GM12878 (cell line): ENCODE measurements at regions of chr19 and their contacts with region 1.

Region 1: GRCh38 chr19:48255376-48256303 is at the start of gene CARD8:
- DNase-seq: peak; percentile 88
- ATAC-seq: peak; percentile 82
- H3K4me3 ChIP-seq: peak within 1 kb of the TSS; percentile 82
- H3K27ac ChIP-seq: peak within 1 kb of the TSS; percentile 96
- H3K4me1 ChIP-seq: peaks cover 13% of the 10 kb centered on the region
- H3K27me3 ChIP-seq: no peaks in the 10 kb centered on the region
- CTCF ChIP-seq: no peak; a peak in 1 of 6 replicates
- EP300 ChIP-seq: 0 out of 4 replicates have a peak, but pooled peaks of 1 of the 2 experiments have one; percentile 14
- POLR2A ChIP-seq: peak; percentile 81
- RAD21 ChIP-seq: no peak
- polyA plus RNA-seq, gene CARD8: 41.7 to 44.0 TPM

Region 2: GRCh38 chr19:47973529-47973928 is 282.1 kb before region 1 on chr19:
- CTCF ChIA-PET with region 1: no interaction called
- POLR2A ChIA-PET with region 1: no interaction called
- RAD21 ChIA-PET with region 1: no interaction called
- SMC1A ChIA-PET with region 1: no interaction called
- in situ Hi-C with region 1: loop called (anchors 10 kb)
- intact Hi-C with region 1: no loop called
- DNase-seq: no peak
- ATAC-seq: no peak
- H3K4me3 ChIP-seq: no peak overlapping the region
- H3K27ac ChIP-seq: no peak overlapping the region
- H3K4me1 ChIP-seq: no peaks in the 10 kb centered on the region
- H3K27me3 ChIP-seq: no peaks in the 10 kb centered on the region
- CTCF ChIP-seq: no peak
- EP300 ChIP-seq: no peak
- POLR2A ChIP-seq: no peak
- RAD21 ChIP-seq: no peak

Region 3: GRCh38 chr19:48110350-48110966 is 145.2 kb before region 1 on chr19 and contains the start of gene PLA2G4C:
- CTCF ChIA-PET with region 1: interaction called, 60 read pairs
- POLR2A ChIA-PET with region 1: interaction called, 5 read pairs
- RAD21 ChIA-PET with region 1: interaction called, 38 read pairs
- SMC1A ChIA-PET with region 1: interaction called, 44 read pairs
- in situ Hi-C with region 1: no loop called
- intact Hi-C with region 1: loop called (anchors 1 kb)
- DNase-seq: peak; percentile 48
- ATAC-seq: peak; percentile 86
- H3K4me3 ChIP-seq: peak within 1 kb of the TSS; percentile 83; the same call in 1 of the 2 replicates
- H3K27ac ChIP-seq: peak within 1 kb of the TSS; percentile 62
- H3K4me1 ChIP-seq: peaks cover 7% of the 10 kb centered on the region
- H3K27me3 ChIP-seq: no peaks in the 10 kb centered on the region
- CTCF ChIP-seq: no peak
- EP300 ChIP-seq: 0 out of 4 replicates have a peak, but pooled peaks of 1 of the 2 experiments have one; percentile 14
- POLR2A ChIP-seq: peak; percentile 86
- RAD21 ChIP-seq: no peak
- polyA plus RNA-seq, gene PLA2G4C: 0.53 to 0.64 TPM

Region 4: GRCh38 chr19:48170038-48170812 is 85.4 kb before region 1 on chr19 and contains the starts of genes LIG1 and ZSWIM9:
- CTCF ChIA-PET with region 1: interaction called, 4 read pairs
- POLR2A ChIA-PET with region 1: interaction called, 3 read pairs
- RAD21 ChIA-PET with region 1: interaction called, 6 read pairs
- SMC1A ChIA-PET with region 1: interaction called, 4 read pairs
- in situ Hi-C with region 1: no loop called
- intact Hi-C with region 1: loop called (anchors 10 kb)
- DNase-seq: peak; percentile 71
- ATAC-seq: peak; percentile 97
- H3K4me3 ChIP-seq: peak within 1 kb of the TSS; percentile 99
- H3K27ac ChIP-seq: peak within 1 kb of the TSS; percentile 99
- H3K4me1 ChIP-seq: peaks cover 19% of the 10 kb centered on the region
- H3K27me3 ChIP-seq: no peaks in the 10 kb centered on the region
- CTCF ChIP-seq: no peak
- EP300 ChIP-seq: 0 out of 4 replicates have a peak, but pooled peaks of 1 of the 2 experiments have one; percentile 28
- POLR2A ChIP-seq: peak; percentile 88
- RAD21 ChIP-seq: no peak
- polyA plus RNA-seq, gene LIG1: 7.8 to 31.6 TPM
- polyA plus RNA-seq, gene ZSWIM9: 0.29 TPM in 1 of 2 experiments, not detected in the other

Region 5: GRCh38 chr19:48244281-48244680 is 11.4 kb before region 1 on chr19:
- CTCF ChIA-PET with region 1: interaction called, 16 read pairs
- POLR2A ChIA-PET with region 1: interaction called, 6 read pairs
- RAD21 ChIA-PET with region 1: interaction called, 21 read pairs
- SMC1A ChIA-PET with region 1: interaction called, 17 read pairs
- in situ Hi-C with region 1: no loop called
- intact Hi-C with region 1: no loop called
- DNase-seq: no peak
- ATAC-seq: peak; percentile 67
- H3K4me3 ChIP-seq: no peak overlapping the region
- H3K27ac ChIP-seq: no peak overlapping the region; the same call in 1 of the 2 replicates
- H3K4me1 ChIP-seq: peaks cover 8% of the 10 kb centered on the region
- H3K27me3 ChIP-seq: no peaks in the 10 kb centered on the region
- CTCF ChIP-seq: no peak
- EP300 ChIP-seq: no peak
- POLR2A ChIP-seq: no peak
- RAD21 ChIP-seq: no peak

Region 6: DNA sequence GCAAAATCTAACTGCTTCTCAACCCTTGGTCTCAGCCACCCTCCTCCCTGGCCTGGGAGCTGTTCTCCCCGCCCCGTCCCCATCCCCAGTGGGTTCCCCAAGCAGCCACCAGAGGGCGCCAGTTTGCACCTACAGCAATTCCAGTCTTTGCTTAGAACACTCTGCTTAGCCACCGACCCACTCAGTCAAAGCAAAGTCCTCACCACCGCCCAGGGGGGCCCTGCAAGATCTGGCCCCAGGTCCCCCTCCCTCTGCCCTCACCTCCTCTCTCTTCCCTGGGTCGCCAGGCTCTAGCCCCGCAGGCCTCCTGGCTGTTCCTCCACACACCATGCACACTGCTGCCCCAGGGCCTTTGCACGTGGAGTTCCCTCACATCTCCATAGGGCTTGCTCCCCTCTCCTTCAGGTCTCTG is 95.7 kb after region 1 on chr19:
- CTCF ChIA-PET with region 1: no interaction called
- POLR2A ChIA-PET with region 1: no interaction called
- RAD21 ChIA-PET with region 1: no interaction called
- SMC1A ChIA-PET with region 1: no interaction called
- in situ Hi-C with region 1: no loop called
- intact Hi-C with region 1: no loop called
- DNase-seq: no peak
- ATAC-seq: peak; percentile 100
- H3K4me3 ChIP-seq: no peak overlapping the region
- H3K27ac ChIP-seq: no peak overlapping the region
- H3K4me1 ChIP-seq: no peaks in the 10 kb centered on the region
- H3K27me3 ChIP-seq: no peaks in the 10 kb centered on the region
- CTCF ChIP-seq: peak; percentile 71 to 93 (median 90)
- EP300 ChIP-seq: no peak
- POLR2A ChIP-seq: no peak
- RAD21 ChIP-seq: peak; percentile 61